HCT116 (cell line): ENCODE measurements at regions of chr1 and their contacts with region 1.

Region 1: GRCh38 chr1:98749152-98749756 is 87.7 kb downstream of the SNX7 start:
- DNase-seq: no peak
- ATAC-seq: peak; percentile 42; the same call in 1 of the 2 replicates
- H3K4me3 ChIP-seq: no peak overlapping the region
- H3K27ac ChIP-seq: no peak overlapping the region
- H3K4me1 ChIP-seq: no peaks in the 10 kb centered on the region
- H3K27me3 ChIP-seq: no peaks in the 10 kb centered on the region
- CTCF ChIP-seq: peak; percentile 22 to 52 (median 33); a peak in 5 of 6 replicates
- POLR2A ChIP-seq: no peak
- RAD21 ChIP-seq: peak; percentile 28

Region 2: GRCh38 chr1:98232678-98233077 is 516.6 kb before region 1 on chr1:
- CTCF ChIA-PET with region 1: no interaction called
- POLR2A ChIA-PET with region 1: no interaction called
- RAD21 ChIA-PET with region 1: no interaction called
- intact Hi-C with region 1: no loop called
- DNase-seq: no peak
- ATAC-seq: no peak
- H3K4me3 ChIP-seq: no peak overlapping the region
- H3K27ac ChIP-seq: no peak overlapping the region
- H3K4me1 ChIP-seq: no peaks in the 10 kb centered on the region
- H3K27me3 ChIP-seq: no peaks in the 10 kb centered on the region
- CTCF ChIP-seq: no peak
- POLR2A ChIP-seq: no peak
- RAD21 ChIP-seq: no peak

Region 3: DNA sequence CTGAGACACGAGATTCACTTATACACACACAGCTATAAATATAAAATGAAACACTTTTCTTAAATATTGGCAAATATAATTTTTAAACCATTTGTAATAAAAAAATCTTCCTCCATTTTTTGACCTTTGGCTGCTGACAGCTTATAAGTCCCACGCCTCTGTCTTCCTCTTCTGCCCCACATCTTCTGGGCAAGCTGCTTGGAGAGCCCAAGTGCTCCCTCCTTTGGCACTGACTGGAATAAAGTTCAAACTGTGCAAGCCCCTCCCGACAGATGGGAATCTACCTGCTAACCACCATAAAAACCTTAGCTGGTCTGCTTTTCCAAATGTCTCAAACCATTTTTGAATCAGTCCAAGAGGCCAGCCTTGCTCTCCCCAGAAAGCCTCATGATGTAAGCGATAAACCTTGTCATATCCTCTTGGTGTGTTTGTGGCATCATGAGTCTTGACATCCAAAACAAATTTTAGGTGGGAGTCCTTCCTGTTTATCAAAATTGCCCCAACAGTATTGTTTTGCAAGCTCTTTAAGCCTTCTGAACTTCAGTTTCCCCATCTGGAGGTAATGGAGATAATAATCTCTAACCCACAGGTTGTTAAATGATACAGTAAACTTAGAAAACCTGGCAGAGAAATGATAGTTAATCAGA is 12.1 kb after region 1 on chr1:
- CTCF ChIA-PET with region 1: interaction called, 15 read pairs
- POLR2A ChIA-PET with region 1: no interaction called
- RAD21 ChIA-PET with region 1: no interaction called
- intact Hi-C with region 1: no loop called
- DNase-seq: no peak
- ATAC-seq: peak; percentile 71
- H3K4me3 ChIP-seq: no peak overlapping the region
- H3K27ac ChIP-seq: no peak overlapping the region
- H3K4me1 ChIP-seq: no peaks in the 10 kb centered on the region
- H3K27me3 ChIP-seq: no peaks in the 10 kb centered on the region
- CTCF ChIP-seq: peak in 2 of 3 experiments; percentile 21 to 39; a peak in 3 of 6 replicates
- POLR2A ChIP-seq: no peak
- RAD21 ChIP-seq: peak; percentile 29; the same call in 1 of the 2 replicates